ENCODE measurements at regions of chr10 and their contacts with region 1.

Region 1: DNA sequence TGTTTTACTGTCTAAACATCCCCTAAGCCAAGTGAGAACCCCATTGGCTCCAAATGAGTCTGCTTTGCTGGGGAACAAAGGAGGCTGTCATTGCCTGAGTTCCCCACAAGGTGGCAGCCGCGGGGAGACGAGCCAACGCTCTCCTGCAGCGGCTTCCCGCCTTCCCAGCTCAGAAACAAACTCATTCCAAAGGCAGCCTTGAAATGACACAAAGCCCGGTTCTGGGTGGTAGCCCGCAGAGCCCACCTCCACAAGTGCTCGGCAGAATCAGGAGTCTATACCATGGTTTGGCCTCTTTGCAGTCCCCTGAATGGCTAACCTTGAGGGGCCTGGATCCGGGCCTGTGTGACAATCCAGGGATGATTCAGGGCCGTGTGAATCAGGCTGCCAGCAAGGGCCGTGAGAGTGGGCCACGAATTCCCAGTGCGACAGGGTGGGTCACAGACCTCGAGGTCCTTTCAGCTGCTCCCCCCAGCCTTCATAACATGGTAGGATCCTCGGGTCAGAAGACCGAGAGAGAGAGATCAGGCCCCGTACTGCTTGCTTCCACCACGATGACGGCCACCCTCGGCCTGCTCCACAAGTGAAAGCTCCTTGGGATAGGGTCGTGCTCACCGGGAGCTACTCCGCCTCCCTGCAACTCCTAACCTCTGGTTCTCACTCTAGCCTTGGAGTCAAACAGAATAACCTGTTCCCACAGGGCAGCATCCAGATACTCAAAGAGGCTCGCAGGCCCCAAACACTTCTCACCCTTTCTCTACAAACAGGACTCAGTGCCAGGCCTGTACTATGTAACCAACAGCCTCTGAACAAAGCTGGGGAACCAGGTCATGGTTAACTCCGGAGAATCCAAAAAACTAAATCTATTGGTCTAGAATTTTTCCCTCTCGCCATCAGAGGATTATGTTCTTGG is 79.6 kb downstream of the DLG5 start:
- DNase-seq: peak; percentile 14 to 71 (median 42)
- ATAC-seq: peak; percentile 83
- H3K4me3 ChIP-seq: no peak overlapping the region
- H3K4me3 Mint-ChIP-seq: no peak overlapping the region
- H3K27ac ChIP-seq: no peak overlapping the region
- H3K27ac Mint-ChIP-seq: no peak overlapping the region
- H3K4me1 ChIP-seq: no peaks in the 10 kb centered on the region
- H3K4me1 Mint-ChIP-seq: peaks cover 0 to 8% (median 0%) of the 10 kb centered on the region in 7 donors
- H3K27me3 ChIP-seq: no peaks in the 10 kb centered on the region
- H3K27me3 Mint-ChIP-seq: no peaks in the 10 kb centered on the region

Region 2: GRCh38 chr10:77873536-77874380 is 26.8 kb after region 1 on chr10:
- CTCF ChIA-PET with region 1: no interaction called
- POLR2A ChIA-PET with region 1: no interaction called
- intact Hi-C with region 1: loop called in 1 of 2 experiments (anchors 1 kb)
- DNase-seq: peak in 2 of 9 donors; percentile 4 to 30
- ATAC-seq: peak; percentile 57
- H3K4me3 ChIP-seq: no peak overlapping the region
- H3K4me3 Mint-ChIP-seq: peak overlapping the region in 3 of 10 donors; percentile 17 to 42 (median 40)
- H3K27ac ChIP-seq: no peak overlapping the region
- H3K27ac Mint-ChIP-seq: peak overlapping the region in 2 of 9 donors; percentile 17 to 76
- H3K4me1 ChIP-seq: peaks cover 0 to 21% of the 10 kb centered on the region in 2 donors
- H3K4me1 Mint-ChIP-seq: peaks cover 0 to 40% (median 6%) of the 10 kb centered on the region in 7 donors
- H3K27me3 ChIP-seq: no peaks in the 10 kb centered on the region
- H3K27me3 Mint-ChIP-seq: peaks cover 0 to 3% (median 0%) of the 10 kb centered on the region in 5 donors

Region 3: DNA sequence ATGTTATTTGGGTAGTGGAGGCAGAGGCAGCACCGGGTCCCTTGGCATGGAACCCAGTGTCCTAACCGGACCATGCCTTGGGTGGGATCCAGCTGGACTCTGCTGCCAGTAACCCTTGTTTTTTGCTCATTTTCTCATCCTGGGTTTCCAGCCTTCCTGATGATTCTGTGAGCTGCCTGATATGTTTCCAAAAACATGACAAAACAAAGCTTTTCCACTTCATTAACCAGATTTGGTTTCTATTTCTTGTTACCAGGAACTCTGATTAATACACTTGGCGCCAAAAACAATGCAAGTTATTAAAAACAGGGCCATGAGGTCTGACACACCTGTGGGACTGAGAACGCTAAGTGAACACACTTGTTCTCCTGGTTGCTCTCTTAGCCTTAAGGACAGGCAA is 112.4 kb after region 1 on chr10:
- CTCF ChIA-PET with region 1: no interaction called
- POLR2A ChIA-PET with region 1: no interaction called
- intact Hi-C with region 1: no loop called
- DNase-seq: no peak
- ATAC-seq: no peak
- H3K4me3 ChIP-seq: no peak overlapping the region
- H3K4me3 Mint-ChIP-seq: no peak overlapping the region
- H3K27ac ChIP-seq: no peak overlapping the region
- H3K27ac Mint-ChIP-seq: no peak overlapping the region
- H3K4me1 ChIP-seq: no peaks in the 10 kb centered on the region
- H3K4me1 Mint-ChIP-seq: peaks cover 0 to 2% (median 0%) of the 10 kb centered on the region in 7 donors
- H3K27me3 ChIP-seq: no peaks in the 10 kb centered on the region
- H3K27me3 Mint-ChIP-seq: peaks cover 0 to 10% (median 4%) of the 10 kb centered on the region in 5 donors

Region 4: DNA sequence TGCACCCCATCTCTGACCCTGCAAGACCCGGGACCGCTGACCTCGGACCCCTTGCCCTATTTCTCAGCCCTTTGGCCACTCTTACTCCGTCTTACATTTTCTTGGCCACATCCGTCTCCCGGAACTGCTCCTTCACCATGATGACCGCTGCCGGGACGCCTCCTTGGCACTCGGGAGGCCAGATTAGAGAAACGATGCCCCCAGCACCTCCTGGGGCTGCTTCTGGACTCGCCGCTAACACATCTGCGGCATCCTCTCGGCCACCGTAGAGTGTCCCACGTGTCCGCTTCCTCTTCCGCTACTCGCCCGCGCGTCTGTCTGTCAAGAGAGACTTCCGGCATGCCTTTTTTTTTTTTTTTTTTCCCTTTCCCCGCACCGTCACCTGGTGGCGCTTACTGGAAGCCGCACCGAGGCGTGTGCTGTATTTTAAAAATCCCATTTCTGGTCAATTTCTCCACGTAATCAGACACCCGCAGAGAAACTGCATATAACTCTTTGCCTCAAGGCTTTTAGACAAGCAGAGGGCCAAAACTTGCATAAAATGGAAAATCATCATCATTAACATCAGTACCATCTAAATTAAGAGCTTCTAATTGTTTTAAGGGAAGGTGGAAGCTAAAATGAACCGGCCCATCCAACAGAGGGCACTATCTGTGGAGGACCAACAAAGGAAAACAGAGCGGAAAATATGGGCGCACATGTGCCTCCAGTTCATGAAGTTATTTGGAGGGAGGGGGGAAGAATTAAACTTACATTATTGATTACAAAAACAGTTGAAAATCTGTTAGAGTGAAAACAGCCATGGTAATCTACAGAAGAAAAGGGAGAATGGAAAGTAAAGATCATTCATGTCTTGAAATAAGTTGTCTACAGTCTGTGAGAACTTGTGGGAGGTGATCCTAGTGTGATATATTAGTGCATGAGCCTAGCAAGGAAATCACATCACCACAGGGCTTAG is 182.6 kb after region 1 on chr10 and contains the start of gene POLR3A:
- CTCF ChIA-PET with region 1: no interaction called
- POLR2A ChIA-PET with region 1: no interaction called
- intact Hi-C with region 1: loop called in 1 of 2 experiments (anchors 2 kb)
- DNase-seq: peak; percentile 79 to 94 (median 90)
- ATAC-seq: peak; percentile 77
- H3K4me3 ChIP-seq: peak within 1 kb of the TSS; percentile 99
- H3K4me3 Mint-ChIP-seq: peak within 1 kb of the TSS; percentile 92 to 100 (median 99)
- H3K27ac ChIP-seq: peak within 1 kb of the TSS; percentile 89
- H3K27ac Mint-ChIP-seq: peak within 1 kb of the TSS; percentile 88 to 99 (median 95)
- H3K4me1 ChIP-seq: peaks cover 12 to 19% of the 10 kb centered on the region in 2 donors
- H3K4me1 Mint-ChIP-seq: peaks cover 22 to 50% (median 37%) of the 10 kb centered on the region in 7 donors
- H3K27me3 ChIP-seq: no peaks in the 10 kb centered on the region
- H3K27me3 Mint-ChIP-seq: no peaks in the 10 kb centered on the region
- total RNA-seq, gene POLR3A: 12.0 to 20.9 (median 19.0) TPM

Measured in naive thymus-derived CD4-positive, alpha-beta T cell (primary cell).